ENCODE measurements at regions of chr12 and their contacts with region 1.

Region 1: DNA sequence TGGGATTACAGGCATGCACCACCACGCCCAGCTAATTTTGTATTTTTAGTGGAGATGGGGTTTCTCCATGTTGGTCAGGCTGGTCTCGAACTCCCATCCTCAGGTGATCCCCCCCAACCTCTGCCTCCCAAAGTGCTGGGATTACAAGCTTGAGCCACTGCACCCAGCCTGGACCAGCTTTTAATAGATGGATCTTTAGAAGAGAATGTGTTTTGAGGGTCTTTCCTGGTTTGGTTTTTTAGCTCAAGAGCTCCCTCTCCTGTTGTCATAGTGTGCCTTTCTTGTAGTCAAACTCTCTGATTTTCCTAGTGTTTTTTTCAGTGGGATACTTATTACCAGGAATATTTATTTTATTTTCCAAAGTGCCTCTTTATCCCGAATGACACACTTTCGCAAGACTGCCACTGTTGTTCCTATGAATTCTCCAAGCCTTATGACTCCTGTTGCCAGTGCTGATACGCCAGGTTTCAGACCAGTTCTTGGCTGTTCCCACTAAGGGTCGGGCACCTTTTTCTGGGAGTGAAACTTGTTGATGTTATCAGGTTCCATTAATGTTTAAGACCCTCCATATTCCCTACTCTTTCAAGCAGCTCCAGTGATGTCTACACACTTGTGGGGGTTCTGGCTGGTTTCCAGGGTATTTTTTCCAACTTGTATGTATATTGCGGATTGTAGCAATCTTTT is 31.5 kb upstream of the LIMA1 start:
- DNase-seq: no peak
- ATAC-seq: no peak
- H3K4me3 ChIP-seq: no peak overlapping the region
- H3K27ac ChIP-seq: no peak overlapping the region
- H3K4me1 ChIP-seq: no peaks in the 10 kb centered on the region
- H3K27me3 ChIP-seq: no peaks in the 10 kb centered on the region
- CTCF ChIP-seq: peak; percentile 24 to 71 (median 58)
- POLR2A ChIP-seq: no peak

Region 2: GRCh38 chr12:50074936-50075807 is 239.6 kb before region 1 on chr12:
- intact Hi-C with region 1: loop called in 8 of 10 experiments (anchors 10 kb)
- DNase-seq: peak; percentile 81 to 91 (median 84)
- ATAC-seq: peak; percentile 86 to 91 (median 89)
- H3K4me3 ChIP-seq: no peak overlapping the region
- H3K27ac ChIP-seq: no peak overlapping the region
- H3K4me1 ChIP-seq: peaks cover 0 to 13% (median 3%) of the 10 kb centered on the region in 12 donors
- H3K27me3 ChIP-seq: no peaks in the 10 kb centered on the region
- CTCF ChIP-seq: peak; percentile 87 to 96 (median 93)
- POLR2A ChIP-seq: no peak

Region 3: DNA sequence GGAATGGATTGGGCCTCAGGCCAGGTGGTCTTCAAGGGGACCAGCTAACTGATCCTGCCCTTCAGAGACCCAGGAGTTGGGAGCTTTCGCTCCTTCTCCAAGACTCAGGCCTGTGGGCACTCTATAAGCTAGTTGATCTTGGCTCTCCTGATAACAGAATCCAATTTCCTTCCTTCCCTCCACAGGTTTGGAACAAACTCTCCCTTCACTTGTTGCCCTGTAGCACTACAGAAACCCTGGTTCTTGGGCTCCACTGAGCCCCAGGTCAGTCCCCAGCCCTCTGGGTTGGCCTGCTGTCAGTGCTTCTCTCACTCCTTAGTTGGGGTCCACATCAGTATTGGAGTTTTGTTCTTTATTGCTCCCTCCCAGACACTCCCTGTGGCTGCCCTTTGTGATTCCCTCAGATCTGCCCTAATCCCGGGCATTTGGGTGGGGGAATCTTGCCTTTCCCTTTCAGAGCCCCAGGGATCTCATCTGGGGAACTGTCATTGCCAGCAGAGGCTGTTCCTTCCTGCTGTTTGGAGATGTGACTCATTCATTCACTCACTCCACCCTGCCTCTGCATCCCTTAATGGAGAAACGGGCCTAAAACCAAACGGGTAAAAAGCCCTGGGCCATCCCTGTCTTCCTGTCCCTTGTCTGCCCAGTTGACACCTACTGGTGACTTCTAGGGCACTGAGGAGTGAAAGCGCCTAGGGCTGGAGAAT is 215.3 kb before region 1 on chr12:
- intact Hi-C with region 1: loop called in 1 of 10 experiments (anchors 10 kb)
- DNase-seq: no peak
- ATAC-seq: peak in 1 of 4 donors; percentile 12
- H3K4me3 ChIP-seq: no peak overlapping the region
- H3K27ac ChIP-seq: peak overlapping the region in 1 of 12 donors; percentile 43
- H3K4me1 ChIP-seq: peaks cover 0 to 26% (median 14%) of the 10 kb centered on the region in 12 donors
- H3K27me3 ChIP-seq: no peaks in the 10 kb centered on the region
- CTCF ChIP-seq: no peak
- POLR2A ChIP-seq: no peak

Region 4: GRCh38 chr12:50201978-50202521 is 112.7 kb before region 1 on chr12:
- intact Hi-C with region 1: loop called in 2 of 10 experiments (anchors 5 to 10 kb)
- DNase-seq: no peak
- ATAC-seq: no peak
- H3K4me3 ChIP-seq: no peak overlapping the region
- H3K27ac ChIP-seq: no peak overlapping the region
- H3K4me1 ChIP-seq: peaks cover 0 to 7% (median 0%) of the 10 kb centered on the region in 12 donors
- H3K27me3 ChIP-seq: no peaks in the 10 kb centered on the region
- CTCF ChIP-seq: no peak
- POLR2A ChIP-seq: no peak

Region 5: GRCh38 chr12:50222275-50222795 is 92.4 kb before region 1 on chr12:
- intact Hi-C with region 1: loop called in 1 of 10 experiments (anchors 10 kb)
- DNase-seq: peak in 4 of 5 donors; percentile 45 to 62 (median 56)
- ATAC-seq: peak; percentile 71 to 91 (median 89)
- H3K4me3 ChIP-seq: peak overlapping the region; percentile 5 to 64 (median 50)
- H3K27ac ChIP-seq: peak overlapping the region; percentile 37 to 88 (median 74)
- H3K4me1 ChIP-seq: peaks cover 0 to 45% (median 12%) of the 10 kb centered on the region in 12 donors
- H3K27me3 ChIP-seq: no peaks in the 10 kb centered on the region
- CTCF ChIP-seq: peak in 8 of 12 donors; percentile 7 to 54 (median 31)
- POLR2A ChIP-seq: peak in 1 of 2 donors; percentile 19

Region 6: DNA sequence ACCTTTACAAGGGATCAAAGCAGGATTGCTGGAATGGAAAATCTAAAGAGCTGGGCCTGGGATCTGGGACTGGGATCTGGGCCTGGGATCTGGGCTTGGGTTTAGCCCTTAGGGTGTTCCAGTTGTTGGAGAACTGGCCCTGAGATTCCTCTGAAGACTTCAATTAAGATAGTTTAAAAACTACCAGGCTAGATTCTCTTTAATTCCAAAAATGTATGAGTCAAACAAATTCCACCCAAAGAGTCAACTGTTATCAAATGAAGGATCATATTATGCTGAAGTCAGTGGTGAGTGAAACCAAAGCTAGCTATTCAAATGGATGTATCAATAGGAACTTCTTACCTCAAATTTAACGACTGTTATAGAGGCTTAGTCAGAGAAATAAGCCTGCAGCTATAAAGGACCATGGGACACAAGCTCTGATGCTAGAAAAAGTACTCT is 72.0 kb before region 1 on chr12:
- intact Hi-C with region 1: no loop called
- DNase-seq: no peak
- ATAC-seq: no peak
- H3K4me3 ChIP-seq: no peak overlapping the region
- H3K27ac ChIP-seq: peak overlapping the region in 11 of 12 donors; percentile 36 to 86 (median 75)
- H3K4me1 ChIP-seq: peaks cover 2 to 61% (median 26%) of the 10 kb centered on the region in 12 donors
- H3K27me3 ChIP-seq: no peaks in the 10 kb centered on the region
- CTCF ChIP-seq: no peak
- POLR2A ChIP-seq: no peak